Aorta (tissue), 5 donors: ENCODE measurements at regions of chr15 and their contacts with region 1.

Region 1: GRCh38 chr15:48877630-48878595 is at the start of gene EID1:
- DNase-seq: peak; percentile 94 to 96
- ATAC-seq: peak; percentile 100
- H3K4me3 ChIP-seq: peak within 1 kb of the TSS; percentile 50 to 69
- H3K27ac ChIP-seq: peak within 1 kb of the TSS in 1 of 2 donors; percentile 79
- H3K4me1 ChIP-seq: peaks cover 0 to 5% of the 10 kb centered on the region in 2 donors
- H3K27me3 ChIP-seq: no peaks in the 10 kb centered on the region
- total RNA-seq, gene EID1: 152 to 169 TPM

Region 2: DNA sequence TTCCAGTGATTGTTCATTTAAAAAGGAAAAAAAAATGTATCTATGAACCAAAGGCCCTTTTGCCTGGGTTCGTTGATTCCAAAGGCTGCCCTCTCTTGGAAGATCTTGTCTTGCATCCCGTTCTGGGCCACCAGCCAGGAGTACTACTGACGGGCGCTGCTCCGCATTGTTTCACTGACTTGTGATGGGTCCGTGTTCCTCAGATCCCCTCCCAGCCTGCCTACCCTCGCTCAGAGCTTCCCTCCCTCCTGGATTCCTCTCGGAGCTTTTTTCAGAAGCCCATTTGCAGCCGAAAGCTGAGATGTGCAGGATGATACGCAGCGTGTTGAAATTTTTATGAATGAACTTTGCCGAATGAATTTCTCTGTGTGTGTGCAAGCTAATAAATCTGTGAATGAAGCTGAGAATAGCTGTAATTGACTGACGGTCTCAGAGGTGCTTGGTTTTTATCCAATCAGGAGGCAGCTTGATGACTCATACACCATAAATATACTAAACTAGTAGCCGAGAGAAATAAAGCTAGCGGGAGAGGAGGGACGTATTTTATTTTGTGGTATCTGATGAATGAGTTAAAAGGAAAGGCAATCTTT is 85.7 kb after region 1 on chr15 and contains the start of gene SHC4:
- intact Hi-C with region 1: loop called (anchors 5 kb)
- DNase-seq: peak; percentile 70 to 85
- ATAC-seq: peak; percentile 64
- H3K4me3 ChIP-seq: peak within 1 kb of the TSS; percentile 21 to 27
- H3K27ac ChIP-seq: peak within 1 kb of the TSS in 1 of 2 donors; percentile 83
- H3K4me1 ChIP-seq: peaks cover 2 to 3% of the 10 kb centered on the region in 2 donors
- H3K27me3 ChIP-seq: no peaks in the 10 kb centered on the region
- total RNA-seq, gene SHC4: 8.7 to 18.6 TPM

Region 3: GRCh38 chr15:48984811-48985352 is 107.0 kb after region 1 on chr15:
- intact Hi-C with region 1: loop called in 1 of 2 experiments (anchors 5 kb)
- DNase-seq: no peak
- ATAC-seq: peak; percentile 72
- H3K4me3 ChIP-seq: no peak overlapping the region
- H3K27ac ChIP-seq: peak overlapping the region; percentile 68 to 95
- H3K4me1 ChIP-seq: peaks cover 2 to 4% of the 10 kb centered on the region in 2 donors
- H3K27me3 ChIP-seq: no peaks in the 10 kb centered on the region

Region 4: GRCh38 chr15:49235446-49236124 is 357.7 kb after region 1 on chr15:
- intact Hi-C with region 1: no loop called
- DNase-seq: peak in 1 of 2 donors; percentile 59
- ATAC-seq: peak; percentile 87
- H3K4me3 ChIP-seq: no peak overlapping the region
- H3K27ac ChIP-seq: no peak overlapping the region
- H3K4me1 ChIP-seq: no peaks in the 10 kb centered on the region
- H3K27me3 ChIP-seq: no peaks in the 10 kb centered on the region